A549 (cell line): ENCODE measurements at regions of chr6 and their contacts with region 1.

Region 1: DNA sequence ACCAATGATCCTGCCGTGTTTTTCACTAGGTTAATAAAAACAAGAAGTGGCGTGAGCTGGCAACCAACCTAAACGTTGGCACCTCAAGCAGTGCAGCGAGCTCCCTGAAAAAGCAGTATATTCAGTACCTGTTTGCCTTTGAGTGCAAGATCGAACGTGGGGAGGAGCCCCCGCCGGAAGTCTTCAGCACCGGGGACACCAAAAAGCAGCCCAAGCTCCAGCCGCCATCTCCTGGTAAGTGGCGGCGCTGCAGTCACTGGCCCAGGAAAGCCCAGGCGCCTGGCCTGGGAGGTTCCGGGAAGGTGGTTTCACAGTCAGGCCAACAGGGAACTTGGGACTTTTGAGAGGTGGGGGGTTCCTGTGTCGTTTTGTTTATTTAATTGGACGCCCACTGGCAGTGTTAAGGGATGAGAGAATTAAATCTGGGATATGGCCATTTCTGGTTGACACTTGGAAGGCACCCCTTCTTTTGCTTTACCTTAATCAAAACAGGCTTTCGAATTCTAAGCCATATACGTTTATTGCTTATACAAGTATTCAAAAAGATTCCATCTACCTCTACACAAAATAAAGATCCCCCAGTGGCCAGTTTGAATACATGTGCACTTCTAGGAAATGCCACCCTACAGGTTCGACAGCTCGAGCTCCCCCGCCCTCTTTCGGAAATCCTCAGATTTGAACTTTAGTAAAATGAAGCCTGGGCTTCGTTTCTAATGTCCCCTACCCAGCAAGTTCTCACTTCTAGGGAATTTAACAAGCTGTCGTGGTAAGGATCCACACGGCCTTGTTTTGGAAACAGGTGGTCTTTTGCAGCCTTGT is 138.9 kb downstream of the TMEM242 start:
- DNase-seq: peak; percentile 45 to 52
- ATAC-seq: peak; percentile 84 to 94
- H3K4me3 ChIP-seq: no peak overlapping the region
- H3K27ac ChIP-seq: peak overlapping the region in 1 of 2 experiments; percentile 48; a peak in 1 of 6 replicates
- H3K4me1 ChIP-seq: peaks cover 24% of the 10 kb centered on the region
- CTCF ChIP-seq: peak; percentile 75
- EP300 ChIP-seq: no peak
- POLR2A ChIP-seq: no peak
- RAD21 ChIP-seq: peak; percentile 82 to 84

Region 2: GRCh38 chr6:157034436-157035230 is 149.8 kb before region 1 on chr6:
- CTCF ChIA-PET with region 1: interaction called, 16 read pairs
- POLR2A ChIA-PET with region 1: no interaction called
- DNase-seq: peak; percentile 43 to 55
- ATAC-seq: peak; percentile 62 to 81; a peak in 4 of 6 replicates
- H3K4me3 ChIP-seq: no peak overlapping the region
- H3K27ac ChIP-seq: no peak overlapping the region
- H3K4me1 ChIP-seq: peaks cover 15% of the 10 kb centered on the region; the same call in 2 of the 3 replicates
- CTCF ChIP-seq: peak; percentile 55
- EP300 ChIP-seq: no peak
- POLR2A ChIP-seq: no peak
- RAD21 ChIP-seq: peak; percentile 49 to 57; a peak in 4 of 5 replicates

Region 3: DNA sequence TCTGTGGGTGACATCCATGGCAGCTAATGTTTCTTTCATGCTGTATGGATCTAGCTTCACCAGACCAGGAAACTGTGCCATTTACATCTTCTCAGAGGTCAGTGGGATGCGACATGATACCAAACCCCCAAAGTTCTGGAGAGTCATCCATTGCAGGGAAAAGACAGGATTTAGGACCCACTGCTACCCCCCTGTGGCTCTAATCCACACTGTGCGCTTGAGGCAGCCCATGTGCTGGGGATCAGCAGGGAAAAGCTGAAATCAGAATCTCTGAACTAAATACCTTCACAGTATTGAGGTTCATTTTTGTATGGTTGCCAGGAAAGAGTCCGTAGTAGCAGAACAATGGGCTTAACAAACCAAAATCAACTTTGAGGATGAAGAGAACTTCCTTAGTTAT is 25.5 kb before region 1 on chr6:
- CTCF ChIA-PET with region 1: interaction called, 10 read pairs
- POLR2A ChIA-PET with region 1: no interaction called
- DNase-seq: no peak
- ATAC-seq: peak in 1 of 2 experiments; percentile 45; a peak in 2 of 6 replicates
- H3K4me3 ChIP-seq: no peak overlapping the region
- H3K27ac ChIP-seq: no peak overlapping the region
- H3K4me1 ChIP-seq: no peaks in the 10 kb centered on the region
- CTCF ChIP-seq: no peak
- EP300 ChIP-seq: no peak
- POLR2A ChIP-seq: no peak
- RAD21 ChIP-seq: 0 out of 5 replicates have a peak, but pooled peaks of 1 of the 2 experiments have one; percentile 12

Region 4: DNA sequence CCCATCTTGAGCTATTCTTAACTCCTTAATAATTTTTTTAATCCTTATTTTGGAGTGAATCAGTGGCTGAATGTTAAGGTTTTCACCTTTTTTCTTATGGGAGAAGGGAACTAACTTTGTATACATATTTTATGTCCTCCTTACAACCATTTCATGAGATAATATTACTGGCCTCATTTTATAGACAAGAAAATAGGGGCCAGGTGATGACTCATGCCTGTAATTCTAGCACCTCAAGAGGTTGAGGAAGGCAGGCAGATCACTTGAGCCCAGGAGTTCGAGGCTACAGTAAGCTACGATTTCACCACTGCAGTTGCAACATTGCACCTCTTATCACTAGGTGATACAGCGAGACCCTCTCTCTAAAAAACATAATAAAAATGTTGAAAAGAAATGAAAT is 10.2 kb after region 1 on chr6:
- CTCF ChIA-PET with region 1: interaction called, 13 read pairs
- POLR2A ChIA-PET with region 1: no interaction called
- DNase-seq: no peak
- ATAC-seq: no peak
- H3K4me3 ChIP-seq: no peak overlapping the region
- H3K27ac ChIP-seq: no peak overlapping the region
- H3K4me1 ChIP-seq: no peaks in the 10 kb centered on the region
- CTCF ChIP-seq: no peak
- EP300 ChIP-seq: no peak
- POLR2A ChIP-seq: no peak
- RAD21 ChIP-seq: no peak

Region 5: GRCh38 chr6:157339432-157339831 is 155.0 kb after region 1 on chr6:
- CTCF ChIA-PET with region 1: no interaction called
- POLR2A ChIA-PET with region 1: no interaction called
- DNase-seq: no peak
- ATAC-seq: no peak
- H3K4me3 ChIP-seq: no peak overlapping the region
- H3K27ac ChIP-seq: no peak overlapping the region
- H3K4me1 ChIP-seq: no peaks in the 10 kb centered on the region
- CTCF ChIP-seq: no peak
- EP300 ChIP-seq: no peak
- POLR2A ChIP-seq: no peak
- RAD21 ChIP-seq: peak; percentile 14 to 28; a peak in 2 of 5 replicates